GM10248 (cell line): ENCODE measurements at regions of chr12 and their contacts with region 1.

Region 1: DNA sequence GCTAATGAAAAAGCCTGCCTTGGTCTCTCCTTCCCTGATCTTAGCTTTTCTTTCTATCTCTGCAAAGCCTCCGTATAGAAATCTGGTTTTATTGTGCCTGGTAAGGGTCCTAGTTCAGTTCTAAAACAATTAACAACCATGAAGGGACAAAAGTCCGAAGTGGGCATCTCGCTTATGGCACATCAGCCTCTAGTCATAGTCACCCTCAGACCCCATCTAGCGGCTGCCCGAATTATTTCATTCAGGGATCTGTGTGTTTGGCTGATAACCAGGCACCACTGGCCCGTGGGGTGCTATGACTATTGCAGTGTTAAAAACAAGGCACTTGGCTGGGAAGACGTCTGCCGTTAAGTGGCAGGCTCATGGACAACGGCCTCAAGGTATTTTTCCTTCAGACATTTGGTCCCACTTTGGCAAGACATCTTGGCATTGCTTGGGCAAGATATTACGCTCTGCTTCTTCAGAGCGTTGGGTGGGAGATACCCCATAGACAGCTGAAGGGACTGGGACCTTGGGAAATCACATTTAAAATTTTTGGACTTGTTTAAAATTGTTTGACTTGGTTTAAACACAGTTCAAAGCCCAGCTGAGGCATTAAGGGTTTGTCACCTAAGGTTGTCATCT is 87.1 kb downstream of the SINHCAF start:
- DNase-seq: peak; percentile 75
- CTCF ChIP-seq: peak; percentile 58

Region 2: GRCh38 chr12:31215518-31216232 is 23.2 kb before region 1 on chr12:
- CTCF ChIA-PET with region 1: interaction called, 12 read pairs
- POLR2A ChIA-PET with region 1: no interaction called
- DNase-seq: peak; percentile 5
- CTCF ChIP-seq: no peak

Region 3: GRCh38 chr12:31226639-31227038 is 12.2 kb before region 1 on chr12:
- CTCF ChIA-PET with region 1: interaction called, 10 read pairs
- POLR2A ChIA-PET with region 1: no interaction called
- DNase-seq: peak; percentile 4
- CTCF ChIP-seq: no peak

Region 4: GRCh38 chr12:31250179-31250578 is 11.3 kb after region 1 on chr12:
- CTCF ChIA-PET with region 1: interaction called, 22 read pairs
- POLR2A ChIA-PET with region 1: interaction called, 6 read pairs
- DNase-seq: no peak
- CTCF ChIP-seq: no peak

Region 5: GRCh38 chr12:31259136-31259886 is 20.4 kb after region 1 on chr12:
- CTCF ChIA-PET with region 1: interaction called, 10 read pairs
- POLR2A ChIA-PET with region 1: no interaction called
- DNase-seq: no peak
- CTCF ChIP-seq: no peak

Region 6: DNA sequence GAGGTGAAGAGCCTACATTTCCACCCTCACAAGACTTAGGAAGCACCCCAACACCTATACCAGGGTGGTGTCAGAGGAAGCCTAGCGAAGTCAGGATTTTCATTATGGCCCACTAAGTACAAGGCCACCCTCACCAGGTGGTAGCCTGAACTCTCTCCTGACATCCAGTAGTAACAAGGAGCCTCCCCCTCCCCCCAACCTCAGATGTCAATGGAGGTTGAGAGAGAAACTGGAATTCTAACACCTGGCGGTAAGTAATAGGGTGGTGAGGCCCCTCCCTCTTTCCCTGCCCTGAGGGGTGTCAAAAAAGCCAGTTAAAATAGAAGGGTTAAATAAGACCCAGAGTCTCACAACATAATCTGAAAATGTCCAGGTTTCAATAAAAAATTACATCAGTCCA is 49.5 kb after region 1 on chr12:
- CTCF ChIA-PET with region 1: no interaction called
- POLR2A ChIA-PET with region 1: no interaction called
- DNase-seq: no peak
- CTCF ChIP-seq: no peak

Region 7: GRCh38 chr12:31482816-31483215 is 243.9 kb after region 1 on chr12:
- CTCF ChIA-PET with region 1: no interaction called
- POLR2A ChIA-PET with region 1: no interaction called
- DNase-seq: no peak
- CTCF ChIP-seq: no peak

Region 8: DNA sequence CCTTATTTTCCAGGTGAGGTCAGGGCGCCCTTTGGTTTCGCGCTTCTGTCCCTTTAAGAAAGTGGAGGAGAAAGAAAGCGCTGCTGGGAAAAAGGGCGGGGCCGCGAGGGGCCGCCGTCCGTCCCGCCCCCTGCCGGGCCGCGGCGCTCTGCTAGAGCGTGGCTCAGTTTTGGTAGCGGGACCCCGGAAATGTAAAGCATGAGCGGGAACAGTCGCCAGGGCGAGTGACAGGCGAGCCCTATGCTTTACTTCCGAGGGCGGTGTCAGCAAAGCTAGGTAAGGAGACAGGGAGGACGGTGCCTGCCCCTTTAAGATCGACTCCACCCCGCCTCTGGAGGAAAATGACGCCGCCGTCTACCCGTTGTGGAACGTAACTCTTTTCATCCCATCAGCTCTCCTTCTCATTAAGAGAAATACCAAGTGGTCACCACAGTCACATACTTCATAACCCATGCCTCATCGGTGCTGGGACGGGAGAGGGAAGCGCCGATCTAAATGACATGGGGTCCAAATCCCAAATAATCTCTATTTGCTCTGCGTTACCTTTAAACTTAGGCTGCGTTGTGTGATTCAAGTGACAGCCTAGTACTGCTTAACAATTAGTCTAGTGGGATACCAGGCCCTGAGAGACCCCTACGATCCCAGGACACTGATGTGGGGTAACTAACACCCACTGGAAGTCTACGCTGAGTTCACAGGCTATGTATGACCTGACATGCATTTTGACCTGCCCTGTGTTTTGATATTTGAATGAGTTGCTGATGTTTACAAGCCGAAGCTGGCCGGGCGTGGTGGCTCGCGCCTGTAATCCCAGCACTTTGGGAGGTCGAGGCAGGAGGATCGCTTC is 420.4 kb after region 1 on chr12 and contains the start of gene ETFBKMT:
- CTCF ChIA-PET with region 1: no interaction called
- POLR2A ChIA-PET with region 1: no interaction called
- DNase-seq: peak; percentile 92
- CTCF ChIP-seq: no peak

Region 9: GRCh38 chr12:31813305-31813704 is 574.4 kb after region 1 on chr12:
- CTCF ChIA-PET with region 1: no interaction called
- POLR2A ChIA-PET with region 1: no interaction called
- DNase-seq: no peak
- CTCF ChIP-seq: peak; percentile 14